PC-3 (cell line): ENCODE measurements at regions of chr3 and their contacts with region 1.

Region 1: GRCh38 chr3:87260270-87260669 is 16.1 kb downstream of the POU1F1 start:
- DNase-seq: peak; percentile 91
- ATAC-seq: peak; percentile 63
- H3K4me3 ChIP-seq: no peak overlapping the region
- H3K27ac ChIP-seq: no peak overlapping the region
- H3K4me1 ChIP-seq: peaks cover 20% of the 10 kb centered on the region
- H3K27me3 ChIP-seq: no peaks in the 10 kb centered on the region
- CTCF ChIP-seq: peak; percentile 89

Region 2: GRCh38 chr3:86785386-86785785 is 474.9 kb before region 1 on chr3:
- CTCF ChIA-PET with region 1: no interaction called
- POLR2A ChIA-PET with region 1: no interaction called
- intact Hi-C with region 1: loop called (anchors 10 kb)
- DNase-seq: peak; percentile 54
- ATAC-seq: peak; percentile 82
- H3K4me3 ChIP-seq: no peak overlapping the region
- H3K27ac ChIP-seq: no peak overlapping the region
- H3K4me1 ChIP-seq: peaks cover 10% of the 10 kb centered on the region
- H3K27me3 ChIP-seq: no peaks in the 10 kb centered on the region
- CTCF ChIP-seq: peak; percentile 71

Region 3: DNA sequence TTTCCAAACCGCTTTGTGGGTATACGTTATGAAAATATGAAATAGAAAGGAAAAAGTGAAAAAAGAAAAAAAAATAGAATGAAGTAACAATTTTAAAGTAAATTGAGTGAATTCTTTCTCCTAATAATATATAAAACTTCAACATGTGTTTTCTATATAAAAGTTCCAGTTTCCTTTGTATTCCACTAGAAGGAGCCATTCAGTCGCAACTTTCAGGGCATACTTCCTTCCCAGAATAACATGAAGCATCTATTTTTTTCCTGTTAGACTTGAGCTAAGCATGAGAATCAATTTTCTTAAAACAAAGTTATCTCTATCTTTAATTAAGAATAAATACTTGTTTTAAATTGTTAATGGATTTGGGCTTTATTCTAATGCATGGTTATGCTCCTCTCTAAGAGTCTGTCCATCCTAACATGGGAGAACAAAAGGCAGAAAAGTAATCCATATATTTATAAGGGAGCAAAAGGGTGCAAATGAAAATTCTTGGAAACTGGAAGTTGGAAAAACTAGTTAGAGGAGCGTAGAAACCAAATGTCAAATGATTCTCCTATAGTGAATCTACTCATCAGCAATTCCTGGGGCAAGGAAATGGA is 253.3 kb before region 1 on chr3:
- CTCF ChIA-PET with region 1: no interaction called
- POLR2A ChIA-PET with region 1: no interaction called
- intact Hi-C with region 1: loop called (anchors 5 kb)
- DNase-seq: peak; percentile 51
- ATAC-seq: peak; percentile 49; the same call in 1 of the 2 replicates
- H3K4me3 ChIP-seq: no peak overlapping the region
- H3K27ac ChIP-seq: no peak overlapping the region
- H3K4me1 ChIP-seq: no peaks in the 10 kb centered on the region
- H3K27me3 ChIP-seq: no peaks in the 10 kb centered on the region
- CTCF ChIP-seq: peak; percentile 81

Region 4: GRCh38 chr3:87247430-87247773 is 12.9 kb before region 1 on chr3:
- CTCF ChIA-PET with region 1: no interaction called
- POLR2A ChIA-PET with region 1: no interaction called
- intact Hi-C with region 1: no loop called
- DNase-seq: peak; percentile 22
- ATAC-seq: peak; percentile 56
- H3K4me3 ChIP-seq: no peak overlapping the region
- H3K27ac ChIP-seq: peak overlapping the region; percentile 59
- H3K4me1 ChIP-seq: peaks cover 30% of the 10 kb centered on the region
- H3K27me3 ChIP-seq: no peaks in the 10 kb centered on the region
- CTCF ChIP-seq: no peak

Region 5: GRCh38 chr3:87298111-87298718 is 37.9 kb after region 1 on chr3:
- CTCF ChIA-PET with region 1: no interaction called
- POLR2A ChIA-PET with region 1: no interaction called
- intact Hi-C with region 1: loop called (anchors 5 kb)
- DNase-seq: peak; percentile 80
- ATAC-seq: peak; percentile 80
- H3K4me3 ChIP-seq: no peak overlapping the region
- H3K27ac ChIP-seq: no peak overlapping the region
- H3K4me1 ChIP-seq: no peaks in the 10 kb centered on the region
- H3K27me3 ChIP-seq: no peaks in the 10 kb centered on the region
- CTCF ChIP-seq: peak; percentile 92

Region 6: GRCh38 chr3:87503900-87504508 is 243.7 kb after region 1 on chr3:
- CTCF ChIA-PET with region 1: no interaction called
- POLR2A ChIA-PET with region 1: no interaction called
- intact Hi-C with region 1: loop called (anchors 1 kb)
- DNase-seq: peak; percentile 92
- ATAC-seq: peak; percentile 54
- H3K4me3 ChIP-seq: no peak overlapping the region
- H3K27ac ChIP-seq: no peak overlapping the region
- H3K4me1 ChIP-seq: peaks cover 34% of the 10 kb centered on the region
- H3K27me3 ChIP-seq: no peaks in the 10 kb centered on the region
- CTCF ChIP-seq: peak; percentile 96

Region 7: DNA sequence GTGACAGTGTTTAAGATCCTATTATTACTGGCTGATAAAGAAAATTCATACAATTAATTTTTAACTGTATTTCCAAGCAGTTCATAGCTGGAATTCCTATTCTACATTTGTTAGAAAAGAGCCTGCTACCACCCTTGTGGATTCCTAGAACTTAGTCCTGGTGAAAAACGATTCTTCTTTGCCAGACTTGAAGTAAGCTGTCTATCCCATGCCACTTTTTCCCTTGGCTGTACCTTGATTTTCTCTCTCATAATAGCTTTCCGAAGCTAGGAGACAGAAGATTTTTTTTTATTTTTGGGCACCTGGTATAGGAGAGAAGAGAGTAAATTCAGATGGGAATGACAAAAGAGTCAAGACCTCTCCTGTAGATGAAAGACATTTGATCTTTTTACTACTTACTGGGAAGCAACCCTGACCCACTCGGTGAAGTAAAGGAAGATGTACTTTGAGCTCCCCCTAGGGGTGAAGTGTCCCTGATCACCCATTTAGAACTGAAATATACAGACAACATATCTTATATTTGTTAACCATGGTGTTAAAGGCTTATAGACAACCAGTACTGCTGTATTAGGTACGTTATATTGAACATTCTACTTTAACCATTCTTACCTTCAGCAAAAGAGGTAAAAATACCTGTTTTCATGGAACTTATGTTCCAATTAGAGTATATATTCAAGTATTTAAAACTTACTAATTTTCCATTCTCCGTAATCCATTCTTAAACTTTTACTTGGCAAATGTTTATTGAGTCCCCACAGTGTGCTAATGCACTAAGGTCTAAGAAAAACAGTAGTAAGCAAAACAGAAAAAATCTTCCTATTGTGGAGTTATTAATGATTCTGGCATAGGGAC is 853.3 kb after region 1 on chr3:
- CTCF ChIA-PET with region 1: interaction called, 3 read pairs
- POLR2A ChIA-PET with region 1: no interaction called
- intact Hi-C with region 1: loop called (anchors 10 kb)
- DNase-seq: peak; percentile 86
- ATAC-seq: peak; percentile 97
- H3K4me3 ChIP-seq: no peak overlapping the region
- H3K27ac ChIP-seq: no peak overlapping the region
- H3K4me1 ChIP-seq: no peaks in the 10 kb centered on the region
- H3K27me3 ChIP-seq: no peaks in the 10 kb centered on the region
- CTCF ChIP-seq: peak; percentile 93

Region 8: GRCh38 chr3:88180398-88180999 is 920.2 kb after region 1 on chr3:
- CTCF ChIA-PET with region 1: no interaction called
- POLR2A ChIA-PET with region 1: no interaction called
- intact Hi-C with region 1: loop called (anchors 1 kb)
- DNase-seq: peak; percentile 69
- ATAC-seq: peak; percentile 76
- H3K4me3 ChIP-seq: no peak overlapping the region
- H3K27ac ChIP-seq: no peak overlapping the region
- H3K4me1 ChIP-seq: no peaks in the 10 kb centered on the region
- H3K27me3 ChIP-seq: no peaks in the 10 kb centered on the region
- CTCF ChIP-seq: peak; percentile 71